CD4-positive, alpha-beta T cell (primary cell): ENCODE measurements at regions of chr6 and their contacts with region 1.

Region 1: DNA sequence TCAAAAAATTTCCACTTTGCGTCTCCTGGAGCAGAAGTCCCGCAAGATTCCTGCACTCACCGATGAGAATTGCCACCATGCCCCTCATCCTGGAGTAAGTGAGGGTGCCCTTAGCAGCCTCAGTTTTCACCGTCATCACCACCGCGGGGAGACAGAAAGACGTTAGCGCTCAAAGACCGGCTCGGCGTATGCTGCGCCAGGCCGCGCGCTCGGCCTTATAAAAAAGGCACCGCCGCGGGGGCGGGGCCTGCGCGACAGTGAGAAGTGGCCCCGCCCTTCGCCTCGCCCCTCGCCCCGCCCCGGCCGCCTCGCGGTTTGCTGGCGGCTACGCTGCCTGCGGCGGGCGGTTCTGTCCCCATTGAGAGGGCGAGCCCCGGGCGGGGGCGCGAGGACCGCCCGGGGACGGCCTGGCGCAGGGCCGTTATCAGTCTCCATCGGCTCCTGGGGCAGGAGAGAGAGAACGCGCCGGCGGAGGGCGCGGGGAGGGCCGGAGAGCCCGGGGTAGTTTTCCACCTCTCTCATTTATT is 122.3 kb upstream of the SLC2A12 start:
- DNase-seq: peak; percentile 87 to 97 (median 94)
- ATAC-seq: peak; percentile 72
- H3K4me3 ChIP-seq: peak overlapping the region; percentile 60
- H3K4me3 Mint-ChIP-seq: peak overlapping the region; percentile 95
- H3K27ac ChIP-seq: peak overlapping the region; percentile 29 to 84
- H3K27ac Mint-ChIP-seq: peak overlapping the region; percentile 84
- H3K4me1 ChIP-seq: peaks cover 66% of the 10 kb centered on the region
- H3K4me1 Mint-ChIP-seq: peaks cover 72% of the 10 kb centered on the region
- H3K27me3 ChIP-seq: no peaks in the 10 kb centered on the region
- H3K27me3 Mint-ChIP-seq: no peaks in the 10 kb centered on the region
- CTCF ChIP-seq: no peak

Region 2: GRCh38 chr6:134247231-134247833 is 72.6 kb after region 1 on chr6:
- CTCF ChIA-PET with region 1: interaction called, 4 read pairs
- POLR2A ChIA-PET with region 1: interaction called, 18 read pairs
- intact Hi-C with region 1: loop called (anchors 1 to 5 kb)
- DNase-seq: peak; percentile 46 to 96 (median 58)
- ATAC-seq: peak; percentile 90
- H3K4me3 ChIP-seq: peak overlapping the region; percentile 6
- H3K4me3 Mint-ChIP-seq: peak overlapping the region; percentile 79
- H3K27ac ChIP-seq: peak overlapping the region; percentile 48 to 72
- H3K27ac Mint-ChIP-seq: peak overlapping the region; percentile 86
- H3K4me1 ChIP-seq: peaks cover 47% of the 10 kb centered on the region
- H3K4me1 Mint-ChIP-seq: peaks cover 65% of the 10 kb centered on the region
- H3K27me3 ChIP-seq: no peaks in the 10 kb centered on the region
- H3K27me3 Mint-ChIP-seq: no peaks in the 10 kb centered on the region
- CTCF ChIP-seq: no peak

Region 3: DNA sequence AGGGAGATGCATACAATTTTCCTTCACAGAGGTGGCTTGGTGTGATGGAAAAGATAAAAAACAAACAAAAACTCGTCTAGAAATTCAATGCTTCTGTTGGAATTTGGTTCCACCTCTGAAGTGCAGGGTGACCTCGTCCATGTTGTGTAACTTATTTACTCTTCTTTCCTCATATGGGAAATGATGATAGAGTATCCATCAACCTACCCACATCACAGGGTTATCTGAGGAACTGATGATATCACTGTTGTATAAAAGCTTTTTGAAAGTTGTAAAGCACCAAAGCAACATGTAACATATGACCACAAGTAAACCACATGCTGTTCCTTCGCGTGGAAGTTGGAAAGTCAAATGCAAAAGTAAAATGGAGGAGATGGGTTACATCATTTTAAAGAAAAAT is 355.2 kb after region 1 on chr6:
- CTCF ChIA-PET with region 1: no interaction called
- POLR2A ChIA-PET with region 1: interaction called, 3 read pairs
- intact Hi-C with region 1: loop called in 1 of 2 experiments (anchors 1 kb)
- DNase-seq: peak in 4 of 14 experiments; percentile 41 to 76 (median 62)
- ATAC-seq: peak; percentile 87
- H3K4me3 ChIP-seq: no peak overlapping the region
- H3K4me3 Mint-ChIP-seq: no peak overlapping the region
- H3K27ac ChIP-seq: no peak overlapping the region
- H3K27ac Mint-ChIP-seq: peak overlapping the region; percentile 71
- H3K4me1 ChIP-seq: peaks cover 10% of the 10 kb centered on the region
- H3K4me1 Mint-ChIP-seq: peaks cover 32% of the 10 kb centered on the region
- H3K27me3 ChIP-seq: no peaks in the 10 kb centered on the region
- H3K27me3 Mint-ChIP-seq: no peaks in the 10 kb centered on the region
- CTCF ChIP-seq: no peak

Region 4: DNA sequence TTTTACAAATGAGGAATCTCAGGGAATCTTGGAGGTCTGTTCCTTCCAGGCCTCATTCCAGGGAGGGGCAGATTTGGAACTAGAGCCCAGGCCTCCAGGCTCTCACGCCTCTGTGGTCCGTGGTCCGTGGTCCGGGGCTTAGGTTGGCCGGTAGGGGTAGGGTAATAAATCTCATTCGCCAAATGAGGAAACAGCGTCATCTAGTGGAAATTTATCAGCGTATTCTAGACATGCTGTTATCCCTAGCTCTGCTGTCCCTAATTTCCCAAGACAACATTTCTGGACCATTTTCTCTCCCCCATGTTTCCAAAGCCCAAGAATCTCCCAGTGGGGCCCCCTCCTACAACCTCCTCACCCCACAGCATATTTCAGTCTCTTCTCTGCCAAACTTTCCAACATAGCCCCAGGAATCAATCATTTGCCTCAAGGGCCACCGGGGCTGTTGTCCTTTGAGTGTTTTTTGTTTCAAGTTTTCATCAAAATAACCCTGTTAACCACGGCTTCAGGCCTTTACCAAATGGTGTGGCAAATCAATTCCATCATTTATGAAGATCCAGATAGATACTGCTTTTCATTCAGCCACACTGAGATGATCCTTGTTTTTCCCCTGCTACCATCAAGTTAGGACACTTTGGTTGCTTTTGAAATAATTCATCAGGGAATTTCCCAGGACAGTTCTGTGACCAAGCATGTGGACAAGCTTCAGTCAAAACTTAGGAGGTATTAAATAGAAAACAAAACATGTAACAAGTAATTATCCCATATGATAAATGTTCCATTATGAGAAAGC is 648.4 kb after region 1 on chr6:
- CTCF ChIA-PET with region 1: interaction called, 8 read pairs
- POLR2A ChIA-PET with region 1: no interaction called
- intact Hi-C with region 1: loop called (anchors 1 kb)
- DNase-seq: peak in 6 of 14 experiments; percentile 3 to 81 (median 53)
- ATAC-seq: peak; percentile 74
- H3K4me3 ChIP-seq: no peak overlapping the region
- H3K4me3 Mint-ChIP-seq: no peak overlapping the region
- H3K27ac ChIP-seq: no peak overlapping the region
- H3K27ac Mint-ChIP-seq: no peak overlapping the region
- H3K4me1 ChIP-seq: no peaks in the 10 kb centered on the region
- H3K4me1 Mint-ChIP-seq: no peaks in the 10 kb centered on the region
- H3K27me3 ChIP-seq: no peaks in the 10 kb centered on the region
- H3K27me3 Mint-ChIP-seq: no peaks in the 10 kb centered on the region
- CTCF ChIP-seq: peak; percentile 72

Region 5: DNA sequence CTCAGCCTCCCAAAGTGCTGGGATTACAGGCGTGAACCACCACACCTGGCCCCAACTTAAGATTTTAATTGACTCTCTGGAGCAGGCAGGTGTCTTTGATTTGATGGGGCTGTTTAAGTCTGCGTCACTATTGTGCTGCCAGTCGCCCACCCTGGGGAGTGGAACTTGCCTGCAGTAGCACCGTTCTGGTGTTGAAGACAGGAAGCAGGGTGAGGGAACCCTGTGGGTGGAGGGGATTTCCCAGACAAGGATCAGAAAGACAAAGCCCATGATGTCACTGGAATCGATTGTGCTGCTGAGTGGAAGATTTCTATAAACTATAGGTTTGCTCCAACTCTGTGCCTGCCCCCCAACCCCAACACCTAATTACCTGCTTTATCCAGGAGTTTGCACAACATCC is 764.2 kb after region 1 on chr6:
- CTCF ChIA-PET with region 1: interaction called, 8 read pairs
- POLR2A ChIA-PET with region 1: interaction called, 3 read pairs
- intact Hi-C with region 1: loop called (anchors 1 to 5 kb)
- DNase-seq: peak in 9 of 14 experiments; percentile 2 to 74 (median 17)
- ATAC-seq: peak; percentile 91
- H3K4me3 ChIP-seq: no peak overlapping the region
- H3K4me3 Mint-ChIP-seq: no peak overlapping the region
- H3K27ac ChIP-seq: no peak overlapping the region
- H3K27ac Mint-ChIP-seq: no peak overlapping the region
- H3K4me1 ChIP-seq: peaks cover 6% of the 10 kb centered on the region
- H3K4me1 Mint-ChIP-seq: peaks cover 12% of the 10 kb centered on the region
- H3K27me3 ChIP-seq: no peaks in the 10 kb centered on the region
- H3K27me3 Mint-ChIP-seq: no peaks in the 10 kb centered on the region
- CTCF ChIP-seq: no peak

Region 6: GRCh38 chr6:135183532-135184440 is 1009.1 kb after region 1 on chr6:
- CTCF ChIA-PET with region 1: no interaction called
- POLR2A ChIA-PET with region 1: no interaction called
- intact Hi-C with region 1: loop called in 1 of 2 experiments (anchors 10 kb)
- DNase-seq: peak; percentile 59 to 89 (median 76)
- ATAC-seq: peak; percentile 57
- H3K4me3 ChIP-seq: peak overlapping the region; percentile 71
- H3K4me3 Mint-ChIP-seq: peak overlapping the region; percentile 94
- H3K27ac ChIP-seq: peak overlapping the region in 1 of 2 donors; percentile 24
- H3K27ac Mint-ChIP-seq: peak overlapping the region; percentile 57
- H3K4me1 ChIP-seq: peaks cover 26% of the 10 kb centered on the region
- H3K4me1 Mint-ChIP-seq: peaks cover 36% of the 10 kb centered on the region
- H3K27me3 ChIP-seq: no peaks in the 10 kb centered on the region
- H3K27me3 Mint-ChIP-seq: no peaks in the 10 kb centered on the region
- CTCF ChIP-seq: peak; percentile 67